ENCODE measurements at regions of chr4 and their contacts with region 1.

Region 1: GRCh38 chr4:109433205-109434006 is at the start of gene SEC24B:
- H3K4me3 Mint-ChIP-seq: peak within 1 kb of the TSS; percentile 79
- H3K27ac Mint-ChIP-seq: peak within 1 kb of the TSS; percentile 86
- H3K4me1 Mint-ChIP-seq: peaks cover 23% of the 10 kb centered on the region
- H3K27me3 Mint-ChIP-seq: no peaks in the 10 kb centered on the region

Region 2: GRCh38 chr4:108650212-108651013 is 783.0 kb before region 1 on chr4 and contains the start of gene OSTC:
- intact Hi-C with region 1: loop called (anchors 10 kb)
- H3K4me3 Mint-ChIP-seq: peak within 1 kb of the TSS; percentile 93
- H3K27ac Mint-ChIP-seq: peak within 1 kb of the TSS; percentile 96
- H3K4me1 Mint-ChIP-seq: peaks cover 27% of the 10 kb centered on the region
- H3K27me3 Mint-ChIP-seq: no peaks in the 10 kb centered on the region

Region 3: DNA sequence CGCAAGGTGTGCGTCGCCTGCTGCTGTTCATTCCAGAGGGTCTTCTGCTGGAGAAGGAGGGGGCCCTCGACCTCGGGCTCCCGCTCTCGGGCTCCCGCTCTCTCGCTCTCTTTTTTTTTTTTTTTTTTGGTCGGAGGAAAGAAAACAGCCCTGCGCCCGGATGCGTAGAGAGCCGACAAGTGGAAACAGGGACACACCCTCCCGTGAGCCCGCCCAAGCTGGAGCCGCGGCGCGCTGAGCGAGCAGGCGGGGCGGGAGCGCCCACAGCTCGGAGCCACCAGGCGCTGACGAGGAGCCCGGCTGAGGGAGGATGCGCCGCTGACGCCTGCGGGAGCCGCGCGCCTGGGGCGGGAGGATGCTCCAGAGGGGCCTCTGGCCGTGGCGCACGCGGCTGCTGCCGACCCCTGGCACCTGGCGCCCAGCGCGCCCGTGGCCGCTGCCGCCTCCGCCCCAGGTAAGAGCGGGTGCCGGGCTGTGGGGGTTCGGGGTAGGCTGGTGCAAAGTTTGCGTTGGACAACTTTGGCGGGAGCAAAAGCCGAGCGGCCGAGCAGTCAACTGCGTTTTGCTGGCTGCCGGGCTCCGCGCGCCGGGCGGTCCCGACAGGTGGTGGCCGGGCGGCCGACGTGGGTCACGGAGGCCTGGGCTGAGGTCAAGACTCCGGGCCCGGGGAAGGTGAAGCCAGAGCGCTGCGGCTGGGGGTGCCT is 126.7 kb after region 1 on chr4 and contains the start of gene MCUB:
- intact Hi-C with region 1: loop called (anchors 5 kb)
- H3K4me3 Mint-ChIP-seq: peak within 1 kb of the TSS; percentile 84
- H3K27ac Mint-ChIP-seq: peak within 1 kb of the TSS; percentile 92
- H3K4me1 Mint-ChIP-seq: peaks cover 29% of the 10 kb centered on the region
- H3K27me3 Mint-ChIP-seq: no peaks in the 10 kb centered on the region

Region 4: GRCh38 chr4:109729718-109730618 is 296.6 kb after region 1 on chr4 and contains the start of gene PLA2G12A:
- intact Hi-C with region 1: loop called (anchors 2 kb)
- H3K4me3 Mint-ChIP-seq: peak within 1 kb of the TSS; percentile 87
- H3K27ac Mint-ChIP-seq: peak within 1 kb of the TSS; percentile 80
- H3K4me1 Mint-ChIP-seq: peaks cover 17% of the 10 kb centered on the region
- H3K27me3 Mint-ChIP-seq: peaks cover 6% of the 10 kb centered on the region

Region 5: DNA sequence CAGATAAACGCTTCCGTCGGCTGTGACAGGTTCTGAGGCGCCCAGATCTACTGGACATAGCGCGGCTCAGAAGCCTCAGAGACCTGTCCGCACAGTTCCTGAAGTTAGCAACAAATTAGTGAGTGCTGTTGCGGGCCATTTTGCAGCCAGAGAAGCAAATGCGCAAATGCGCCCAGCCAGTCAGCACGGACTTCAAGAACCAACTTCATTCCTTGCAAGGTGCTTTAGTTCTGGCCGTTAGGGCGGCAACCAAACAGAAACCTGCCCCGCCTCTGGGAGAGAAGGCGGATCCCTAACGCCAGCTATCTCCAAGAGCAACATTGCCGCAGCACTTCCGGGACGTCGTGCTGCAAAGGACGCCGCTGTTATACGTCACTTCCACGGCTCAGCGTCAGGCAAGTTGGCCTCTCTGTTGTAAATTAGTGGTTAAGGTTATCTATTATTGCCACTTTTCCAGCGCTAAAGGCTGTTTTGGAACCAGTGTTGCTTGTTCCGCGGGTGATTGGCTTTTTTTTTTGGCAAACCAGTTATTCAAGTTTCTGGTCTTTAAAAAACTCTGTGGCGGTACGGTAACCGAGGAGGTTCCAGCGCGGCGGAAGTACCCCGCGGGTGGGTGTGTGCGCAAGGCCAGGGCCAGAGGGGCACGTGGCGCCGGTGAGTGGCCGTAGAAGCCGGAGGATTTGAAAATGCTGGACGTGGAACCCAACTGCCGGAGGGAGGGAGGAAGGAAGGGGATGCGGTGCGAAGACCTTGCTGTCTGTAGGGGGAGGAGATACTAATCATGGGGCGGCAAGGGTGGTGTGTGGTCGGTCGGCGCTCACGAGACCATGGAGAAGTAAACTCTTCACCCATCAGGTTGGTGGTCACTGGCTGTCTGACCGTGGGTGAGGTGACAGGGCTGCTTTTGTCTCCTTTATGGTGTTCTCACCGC is 382.0 kb after region 1 on chr4 and contains the start of gene GAR1:
- intact Hi-C with region 1: loop called (anchors 5 kb)
- H3K4me3 Mint-ChIP-seq: peak within 1 kb of the TSS; percentile 89
- H3K27ac Mint-ChIP-seq: peak within 1 kb of the TSS; percentile 93
- H3K4me1 Mint-ChIP-seq: peaks cover 46% of the 10 kb centered on the region
- H3K27me3 Mint-ChIP-seq: no peaks in the 10 kb centered on the region

Measured in dendritic cell treated with granulocyte-macrophage colony-stimulating factor and Interleukin-4, amounts not matched to agents 40 ng/mL and 50 ng/mL, for 4 days (primary cell).